ENCODE measurements at regions of chr1 and their contacts with region 1.

Region 1: GRCh38 chr1:115807723-115808122 is 33.2 kb downstream of the NHLH2 start:
- DNase-seq: peak in 1 of 2 donors; percentile 59
- ATAC-seq: peak in 6 of 8 donors; percentile 55 to 77 (median 64)
- H3K4me3 ChIP-seq: no peak overlapping the region
- H3K27ac ChIP-seq: no peak overlapping the region
- H3K4me1 ChIP-seq: peaks cover 0 to 23% (median 6%) of the 10 kb centered on the region in 9 donors
- H3K27me3 ChIP-seq: peaks cover 0 to 5% (median 0%) of the 10 kb centered on the region in 7 donors
- CTCF ChIP-seq: peak; percentile 40 to 78 (median 68)

Region 2: DNA sequence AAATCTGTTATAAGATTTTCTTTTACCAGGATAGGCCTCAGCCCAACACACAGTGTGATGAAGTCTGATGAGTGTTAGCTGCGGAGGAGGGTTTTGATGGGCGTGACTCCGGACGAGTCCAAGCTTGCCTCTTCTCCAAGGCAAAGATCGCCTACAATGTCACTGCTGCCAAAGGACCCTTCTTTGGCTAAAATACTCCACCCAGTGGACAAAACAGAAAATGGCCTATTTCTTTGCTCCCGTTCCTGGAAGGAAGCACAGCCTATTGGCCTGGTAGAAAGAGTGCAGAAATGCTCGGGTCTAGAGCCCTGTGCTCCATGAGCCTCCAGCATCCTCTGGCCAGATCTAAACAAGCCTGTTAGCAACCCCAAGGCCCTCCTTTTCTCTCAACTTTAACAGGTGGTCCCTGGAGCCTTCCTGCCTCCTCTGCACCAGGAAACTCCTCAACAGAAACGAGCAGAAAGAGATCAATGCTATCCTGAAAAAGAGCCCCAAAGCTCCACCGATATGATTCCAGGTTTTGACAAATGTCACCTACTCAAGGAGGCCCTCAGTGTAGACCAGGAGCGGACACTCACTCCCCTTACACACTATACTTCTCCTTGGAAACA is 35.8 kb before region 1 on chr1:
- intact Hi-C with region 1: no loop called
- DNase-seq: peak; percentile 37 to 77
- ATAC-seq: peak; percentile 73 to 87 (median 76)
- H3K4me3 ChIP-seq: peak overlapping the region in 6 of 10 donors; percentile 11 to 30 (median 15)
- H3K27ac ChIP-seq: peak overlapping the region in 9 of 10 donors; percentile 17 to 79 (median 68)
- H3K4me1 ChIP-seq: peaks cover 0 to 28% (median 7%) of the 10 kb centered on the region in 9 donors
- H3K27me3 ChIP-seq: peaks cover 0 to 7% (median 0%) of the 10 kb centered on the region in 7 donors
- CTCF ChIP-seq: peak; percentile 42 to 85 (median 75)

Region 3: DNA sequence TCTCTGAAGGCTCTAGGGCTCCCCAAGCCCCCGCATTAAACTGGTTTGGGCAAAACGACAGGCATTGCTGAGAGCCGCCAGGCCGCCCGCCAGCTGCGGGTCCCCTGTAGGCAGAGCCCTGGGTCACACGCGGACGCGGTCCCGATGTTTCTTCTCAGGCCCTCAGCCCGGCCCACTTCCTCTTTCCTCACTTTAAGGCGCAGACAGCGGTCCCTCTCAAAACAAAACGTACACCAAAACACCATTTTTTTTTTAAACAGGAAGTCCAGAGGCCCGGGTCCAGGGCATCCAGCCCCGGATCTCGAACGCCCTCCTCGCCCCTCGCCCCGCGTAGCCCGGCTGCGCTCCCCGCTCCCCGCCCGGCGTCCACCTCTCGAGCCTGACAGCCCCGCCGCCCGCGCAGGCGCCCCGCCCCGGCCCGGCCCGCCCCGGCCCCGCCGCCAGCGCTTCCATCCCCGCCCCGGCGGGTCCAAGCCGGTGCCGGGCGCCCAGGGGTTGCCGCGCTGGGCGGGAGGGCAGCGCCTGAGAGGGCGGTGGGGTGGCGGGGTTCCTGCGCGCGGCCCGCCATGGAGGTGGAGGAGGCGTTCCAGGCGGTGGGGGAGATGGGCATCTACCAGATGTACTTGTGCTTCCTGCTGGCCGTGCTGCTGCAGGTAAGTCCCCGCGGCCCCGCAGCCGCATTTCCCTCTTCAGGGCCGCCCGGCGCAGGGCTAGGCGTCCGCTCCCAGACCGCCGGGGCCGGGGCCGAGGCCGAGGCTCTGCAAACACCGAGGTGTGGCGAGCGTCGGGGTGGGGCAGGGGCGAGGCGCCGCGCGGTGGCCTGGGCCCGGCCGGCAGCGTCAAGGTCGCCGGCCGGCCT is 168.6 kb after region 1 on chr1 and contains the start of gene SLC22A15:
- intact Hi-C with region 1: loop called in 5 of 10 experiments (anchors 2 to 5 kb)
- DNase-seq: peak; percentile 58 to 72
- ATAC-seq: peak; percentile 78 to 92 (median 84)
- H3K4me3 ChIP-seq: peak within 1 kb of the TSS; percentile 61 to 84 (median 72)
- H3K27ac ChIP-seq: peak within 1 kb of the TSS; percentile 70 to 91 (median 85)
- H3K4me1 ChIP-seq: peaks cover 0 to 41% (median 6%) of the 10 kb centered on the region in 9 donors
- H3K27me3 ChIP-seq: peaks cover 0 to 8% (median 0%) of the 10 kb centered on the region in 7 donors
- CTCF ChIP-seq: no peak
- total RNA-seq, gene SLC22A15: 5.7 to 13.1 (median 7.9) TPM

Region 4: DNA sequence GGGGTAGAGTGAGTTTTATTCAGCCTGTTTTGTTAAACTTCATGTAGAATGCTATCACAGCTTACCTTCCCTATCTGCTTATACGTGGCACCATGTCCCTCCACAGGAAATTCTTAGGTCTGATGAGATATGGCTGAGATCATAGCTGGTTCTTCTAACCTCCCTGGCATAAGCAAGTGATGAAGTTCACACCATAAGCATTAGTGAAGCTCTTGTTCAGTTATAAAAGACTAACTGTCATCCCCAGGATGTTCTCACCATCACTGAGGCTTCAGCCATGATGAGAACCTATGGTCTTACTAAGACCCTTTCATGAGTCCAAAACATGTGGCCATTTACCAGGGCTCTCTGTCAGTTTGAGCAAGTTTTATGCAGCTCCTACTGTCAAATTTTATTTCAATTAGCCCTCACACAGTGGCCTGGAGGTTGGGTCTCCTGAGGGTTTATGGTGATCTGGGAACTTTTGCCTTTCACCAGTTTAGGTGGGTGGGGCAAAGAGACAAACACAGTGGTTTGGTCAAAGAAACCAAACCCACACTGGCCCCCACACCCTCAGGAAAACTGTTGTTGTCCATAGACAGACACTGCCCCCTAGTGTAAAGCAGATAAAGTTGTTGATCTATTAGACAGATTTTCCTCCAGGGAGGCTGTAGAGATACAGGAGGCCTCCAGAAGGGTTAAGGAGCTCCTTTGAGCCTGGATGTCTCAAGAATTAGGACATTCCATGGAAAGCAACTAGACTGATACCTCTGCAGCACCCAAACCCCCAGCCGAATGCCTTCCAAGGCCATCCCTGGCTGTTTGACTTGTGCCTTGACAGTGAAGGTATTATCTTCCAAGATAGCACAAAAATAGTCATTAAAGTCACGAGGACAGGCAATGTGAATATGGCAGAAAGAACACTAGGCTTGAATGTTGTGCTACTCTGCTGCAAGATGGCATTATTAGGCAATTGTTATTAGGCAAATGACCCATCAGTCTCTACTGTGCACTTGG is 173.6 kb after region 1 on chr1:
- intact Hi-C with region 1: loop called in 5 of 10 experiments (anchors 2 to 5 kb)
- DNase-seq: peak in 1 of 2 donors; percentile 9
- ATAC-seq: peak in 3 of 8 donors; percentile 19 to 40 (median 23)
- H3K4me3 ChIP-seq: no peak overlapping the region
- H3K27ac ChIP-seq: peak overlapping the region in 1 of 10 donors; percentile 9
- H3K4me1 ChIP-seq: peaks cover 0 to 51% (median 17%) of the 10 kb centered on the region in 9 donors
- H3K27me3 ChIP-seq: peaks cover 0 to 4% (median 0%) of the 10 kb centered on the region in 7 donors
- CTCF ChIP-seq: peak in 7 of 9 donors; percentile 40 to 66 (median 51)

Region 5: DNA sequence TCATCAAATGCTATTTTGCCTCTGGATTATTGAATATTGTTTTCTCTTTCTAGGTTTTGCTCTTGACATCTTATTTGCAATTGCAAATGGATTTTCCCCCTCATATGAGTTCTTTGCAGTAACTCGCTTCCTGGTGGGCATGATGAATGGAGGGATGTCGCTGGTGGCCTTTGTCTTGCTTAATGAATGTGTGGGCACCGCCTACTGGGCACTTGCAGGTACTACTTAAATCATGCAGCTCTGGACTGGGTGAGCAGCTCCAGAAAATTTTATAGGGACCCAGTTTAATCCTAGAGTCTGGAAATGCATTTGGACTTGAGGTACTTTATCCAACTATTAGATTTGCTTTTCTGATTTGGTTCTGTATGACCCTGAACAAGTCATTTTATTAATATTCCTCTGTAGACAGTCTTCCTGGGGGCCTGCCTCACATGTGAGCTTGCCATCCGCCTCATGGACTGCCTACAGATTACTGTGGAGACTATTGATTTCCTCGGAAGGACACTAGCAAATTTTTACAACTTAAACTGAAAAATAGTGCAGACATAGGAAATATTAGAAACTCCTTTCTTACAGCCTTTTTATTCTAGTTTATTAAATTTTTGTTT is 213.0 kb after region 1 on chr1:
- intact Hi-C with region 1: loop called (anchors 2 to 10 kb)
- DNase-seq: peak; percentile 29 to 39
- ATAC-seq: peak; percentile 56 to 72 (median 64)
- H3K4me3 ChIP-seq: no peak overlapping the region
- H3K27ac ChIP-seq: no peak overlapping the region
- H3K4me1 ChIP-seq: peaks cover 0 to 18% (median 0%) of the 10 kb centered on the region in 9 donors
- H3K27me3 ChIP-seq: no peaks in the 10 kb centered on the region
- CTCF ChIP-seq: peak; percentile 19 to 75 (median 64)

Region 6: GRCh38 chr1:116498789-116499628 is 691.3 kb after region 1 on chr1:
- intact Hi-C with region 1: loop called in 3 of 10 experiments (anchors 10 kb)
- DNase-seq: peak; percentile 48 to 72
- ATAC-seq: peak; percentile 63 to 80 (median 70)
- H3K4me3 ChIP-seq: no peak overlapping the region
- H3K27ac ChIP-seq: peak overlapping the region in 6 of 10 donors; percentile 18 to 80 (median 40)
- H3K4me1 ChIP-seq: peaks cover 0 to 75% (median 37%) of the 10 kb centered on the region in 9 donors
- H3K27me3 ChIP-seq: no peaks in the 10 kb centered on the region
- CTCF ChIP-seq: peak; percentile 64 to 87 (median 82)

Measured in heart right ventricle (tissue), 16 donors.